BJ (cell line): ENCODE measurements at regions of chr3 and their contacts with region 1.

Region 1: GRCh38 chr3:117515309-117515708 is 805.7 kb downstream of the TUSC7 start:
- DNase-seq: no peak
- H3K4me3 ChIP-seq: no peak overlapping the region
- H3K27me3 ChIP-seq: no peaks in the 10 kb centered on the region
- CTCF ChIP-seq: no peak

Region 2: DNA sequence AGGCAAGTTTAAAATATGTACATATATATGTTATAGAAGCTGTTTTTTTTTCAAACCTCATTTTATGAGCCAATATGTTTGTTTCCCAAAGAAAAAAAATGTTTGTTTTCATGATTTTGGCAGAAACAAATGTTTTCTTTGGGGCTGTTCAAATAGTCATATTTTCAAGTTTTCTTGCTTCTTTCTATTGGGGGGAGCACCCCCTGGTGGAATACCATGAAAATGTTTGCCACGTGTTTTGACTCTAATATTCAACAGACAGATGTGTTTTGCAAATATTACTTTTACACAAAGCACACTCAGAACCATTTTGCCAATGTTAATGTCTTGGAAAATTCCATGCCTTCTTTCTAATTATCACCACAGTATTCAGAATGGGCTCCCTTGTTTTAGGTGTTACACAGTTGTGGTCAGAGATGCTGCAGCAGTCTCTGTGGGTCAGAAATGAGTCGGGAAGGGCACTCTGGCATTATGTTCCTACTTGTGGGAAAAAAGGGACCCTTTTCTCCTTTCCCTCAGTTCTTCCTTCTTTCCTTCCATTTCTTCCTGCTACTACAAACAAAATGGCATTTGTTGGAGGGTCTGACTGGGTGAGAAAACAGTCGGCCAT is 11.3 kb after region 1 on chr3:
- CTCF ChIA-PET with region 1: interaction called, 10 read pairs
- POLR2A ChIA-PET with region 1: no interaction called
- DNase-seq: no peak
- H3K4me3 ChIP-seq: no peak overlapping the region
- H3K27me3 ChIP-seq: no peaks in the 10 kb centered on the region
- CTCF ChIP-seq: peak; percentile 70